Left colon (tissue), 2 donors: ENCODE measurements at regions of chr14 and their contacts with region 1.

Region 1: DNA sequence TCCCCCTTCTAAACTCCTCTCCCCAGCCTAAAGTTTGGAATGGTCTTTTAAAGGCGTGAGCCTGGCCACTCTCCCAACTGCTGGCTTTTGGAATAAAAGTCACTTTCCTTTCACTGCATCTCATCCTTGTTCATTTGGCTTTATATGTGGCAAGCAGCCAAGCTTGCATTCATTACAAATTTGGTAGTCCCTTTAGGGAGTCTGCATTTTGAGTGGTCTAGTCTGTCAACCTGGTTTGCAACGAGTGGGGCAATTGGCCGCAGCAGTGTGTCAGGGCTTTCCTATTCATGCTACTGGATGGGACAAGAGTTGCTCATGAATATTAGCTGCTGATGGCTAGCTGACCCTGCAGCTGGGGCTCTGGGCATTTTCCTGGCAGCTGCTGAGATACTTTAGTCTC is 57.0 kb downstream of the CATSPERB start:
- DNase-seq: no peak
- ATAC-seq: no peak

Region 2: GRCh38 chr14:91586410-91586809 is 88.5 kb before region 1 on chr14:
- intact Hi-C with region 1: no loop called
- DNase-seq: no peak
- ATAC-seq: no peak

Region 3: DNA sequence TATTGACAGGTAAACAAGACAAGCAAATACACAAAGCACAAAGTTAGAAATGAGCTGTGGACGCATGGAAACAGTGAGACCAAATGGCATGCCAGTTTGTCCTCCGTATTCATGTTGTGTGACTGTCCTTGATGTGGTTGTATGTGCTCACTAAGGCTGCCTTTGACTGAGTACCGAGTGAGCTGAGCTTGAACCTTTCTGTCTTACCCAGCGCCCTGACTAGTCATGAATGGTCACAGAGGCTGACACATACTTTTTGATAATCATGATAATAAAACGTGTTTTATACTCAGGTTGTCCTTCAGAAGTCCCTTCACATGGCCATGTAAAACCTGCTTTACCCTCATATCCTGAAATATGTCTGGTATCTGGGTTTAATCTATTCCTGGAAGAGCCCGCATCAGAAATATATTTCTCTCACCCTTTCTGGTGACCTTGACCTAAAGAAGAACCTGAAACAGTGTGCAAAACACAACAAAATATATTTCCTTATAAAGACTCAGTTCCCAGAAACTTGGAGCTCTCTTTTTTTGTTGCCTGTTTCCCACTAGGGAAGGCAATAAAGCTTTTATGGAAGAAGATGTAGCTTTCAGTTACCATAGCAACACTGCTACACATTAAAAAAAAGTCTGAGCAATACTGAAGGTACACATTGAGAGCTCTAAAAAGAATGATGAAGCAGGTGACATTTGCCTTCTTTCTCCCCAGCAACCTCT is 57.7 kb after region 1 on chr14:
- intact Hi-C with region 1: no loop called
- DNase-seq: no peak
- ATAC-seq: no peak

Region 4: GRCh38 chr14:91953170-91953985 is 278.5 kb after region 1 on chr14:
- intact Hi-C with region 1: no loop called
- DNase-seq: no peak
- ATAC-seq: no peak

Region 5: DNA sequence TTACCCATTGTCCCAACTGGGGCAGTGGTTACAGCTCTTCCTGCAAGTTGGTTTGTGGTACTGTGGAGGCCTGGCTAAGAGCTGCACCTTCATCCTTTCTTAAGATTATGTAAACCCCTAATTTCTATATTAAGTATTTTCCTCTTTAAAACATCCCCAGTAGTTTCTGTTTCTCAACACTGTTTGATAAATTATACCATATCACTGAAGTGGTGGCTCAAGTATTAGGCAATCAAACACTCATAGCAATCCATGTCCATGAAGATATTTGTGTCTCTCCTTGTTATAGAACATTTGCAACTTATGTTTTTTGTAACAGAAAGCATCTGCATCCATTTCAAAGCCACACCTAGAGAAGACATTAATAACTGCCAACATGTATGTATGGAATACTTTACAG is 399.6 kb after region 1 on chr14:
- intact Hi-C with region 1: loop called in 1 of 2 experiments (anchors 5 kb)
- DNase-seq: no peak
- ATAC-seq: no peak